AG04450 (cell line): ENCODE measurements at regions of chr17 and their contacts with region 1.

Region 1: GRCh38 chr17:17496189-17497064 is at the start of gene RASD1:
- DNase-seq: peak; percentile 56
- H3K4me3 ChIP-seq: peak within 1 kb of the TSS; percentile 66
- H3K27ac ChIP-seq: peak within 1 kb of the TSS; percentile 11
- H3K27me3 ChIP-seq: peaks cover 2% of the 10 kb centered on the region
- CTCF ChIP-seq: peak; percentile 56
- polyA plus RNA-seq, gene RASD1: 0.55 and 0.91 TPM in 2 replicates

Region 2: GRCh38 chr17:17435323-17435722 is 61.1 kb before region 1 on chr17:
- CTCF ChIA-PET with region 1: interaction called, 3 read pairs
- POLR2A ChIA-PET with region 1: interaction called, 10 read pairs
- DNase-seq: peak; percentile 92
- H3K4me3 ChIP-seq: peak overlapping the region; percentile 27; the same call in 1 of the 2 replicates
- H3K27ac ChIP-seq: peak overlapping the region; percentile 93
- H3K27me3 ChIP-seq: no peaks in the 10 kb centered on the region
- CTCF ChIP-seq: peak; percentile 66

Region 3: DNA sequence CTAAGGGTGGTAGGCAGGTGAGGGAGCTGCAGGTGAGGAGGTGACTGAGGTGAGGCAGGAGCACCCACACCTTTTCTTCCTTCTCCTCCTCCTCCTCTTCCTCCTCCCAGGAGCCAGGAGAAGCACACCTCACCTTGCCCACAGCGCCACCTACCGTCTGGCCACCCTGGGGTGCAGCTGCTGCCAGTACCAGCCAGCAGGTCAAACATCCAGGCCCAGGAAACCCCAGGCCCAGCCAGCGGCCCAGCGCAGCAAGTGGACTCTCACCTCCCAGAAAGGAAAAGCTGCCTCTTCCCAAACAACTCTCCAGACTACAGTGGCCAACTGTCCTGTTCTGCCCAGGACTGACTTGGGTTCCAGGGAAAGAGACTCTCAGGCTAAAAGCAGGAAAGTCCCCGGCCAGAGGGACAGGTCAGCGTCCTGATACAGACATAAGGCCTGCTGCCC is 72.3 kb after region 1 on chr17:
- CTCF ChIA-PET with region 1: interaction called, 18 read pairs
- POLR2A ChIA-PET with region 1: interaction called, 12 read pairs
- DNase-seq: no peak
- H3K4me3 ChIP-seq: no peak overlapping the region
- H3K27ac ChIP-seq: no peak overlapping the region
- H3K27me3 ChIP-seq: no peaks in the 10 kb centered on the region
- CTCF ChIP-seq: peak; percentile 82

Region 4: DNA sequence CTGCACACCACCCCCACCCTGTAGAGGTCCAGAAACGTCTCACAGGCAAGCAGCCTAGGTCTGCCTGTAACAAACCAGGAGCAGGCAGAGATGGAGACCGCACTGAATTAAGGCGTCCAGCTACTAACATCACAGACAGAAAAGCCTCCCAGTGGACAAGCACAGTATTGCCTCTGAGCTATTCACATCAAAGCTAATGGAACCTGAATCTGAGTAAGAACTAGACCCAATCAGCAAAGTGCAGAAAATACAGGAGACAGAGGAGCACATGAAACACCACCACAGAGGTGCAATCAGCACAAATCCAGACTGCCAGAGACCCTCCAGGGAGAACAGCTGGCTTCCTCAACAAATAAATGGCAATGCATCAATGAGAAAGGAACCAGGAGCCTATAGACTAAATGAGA is 117.3 kb after region 1 on chr17:
- CTCF ChIA-PET with region 1: interaction called, 31 read pairs
- POLR2A ChIA-PET with region 1: interaction called, 16 read pairs
- DNase-seq: peak; percentile 46
- H3K4me3 ChIP-seq: no peak overlapping the region
- H3K27ac ChIP-seq: no peak overlapping the region
- H3K27me3 ChIP-seq: no peaks in the 10 kb centered on the region
- CTCF ChIP-seq: peak; percentile 84